Activated CD4-positive, alpha-beta memory T cell treated with anti-CD3 and anti-CD28 coated beads for 36 hours (primary cell): ENCODE measurements at regions of chr2 and their contacts with region 1.

Region 1: GRCh38 chr2:112726497-112727190 is 5.8 kb downstream of the NT5DC4 start:
- DNase-seq: peak; percentile 93
- H3K4me3 Mint-ChIP-seq: no peak overlapping the region
- H3K27ac Mint-ChIP-seq: no peak overlapping the region
- H3K4me1 Mint-ChIP-seq: no peaks in the 10 kb centered on the region
- H3K27me3 Mint-ChIP-seq: no peaks in the 10 kb centered on the region

Region 2: GRCh38 chr2:112584134-112584890 is 142.3 kb before region 1 on chr2 and contains the start of gene CHCHD5:
- CTCF ChIA-PET with region 1: interaction called, 21 read pairs
- POLR2A ChIA-PET with region 1: interaction called, 3 read pairs
- intact Hi-C with region 1: no loop called
- DNase-seq: peak; percentile 97
- H3K4me3 Mint-ChIP-seq: peak within 1 kb of the TSS; percentile 97
- H3K27ac Mint-ChIP-seq: peak within 1 kb of the TSS; percentile 99
- H3K4me1 Mint-ChIP-seq: peaks cover 30% of the 10 kb centered on the region
- H3K27me3 Mint-ChIP-seq: no peaks in the 10 kb centered on the region
- total RNA-seq, gene CHCHD5: 39.3 to 41.4 TPM

Region 3: DNA sequence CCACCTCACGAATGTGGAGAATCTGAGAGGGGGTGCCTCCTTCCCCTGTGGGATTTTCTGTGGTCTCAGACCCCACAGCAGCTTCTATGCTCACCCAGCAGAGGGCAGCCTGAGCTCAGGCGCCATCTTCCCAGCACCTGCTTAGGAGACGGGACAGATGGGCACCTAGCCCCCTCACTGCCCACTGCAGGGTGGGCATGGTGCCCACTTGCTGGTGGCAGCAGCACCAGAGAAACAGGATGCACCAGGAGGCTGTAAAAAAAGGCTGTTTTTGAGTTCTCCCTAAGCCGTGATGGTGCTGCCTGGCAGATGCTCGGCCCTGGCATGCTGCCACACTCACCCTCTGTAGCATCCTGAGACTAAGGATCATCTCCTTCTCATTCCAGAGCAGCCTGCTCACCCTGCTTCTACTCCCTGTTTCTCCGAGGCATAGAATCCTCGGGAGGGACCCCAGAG is 100.0 kb before region 1 on chr2:
- CTCF ChIA-PET with region 1: interaction called, 212 read pairs
- POLR2A ChIA-PET with region 1: interaction called, 4 read pairs
- intact Hi-C with region 1: loop called (anchors 1 kb)
- DNase-seq: peak; percentile 79
- H3K4me3 Mint-ChIP-seq: peak overlapping the region; percentile 46
- H3K27ac Mint-ChIP-seq: peak overlapping the region; percentile 88
- H3K4me1 Mint-ChIP-seq: peaks cover 67% of the 10 kb centered on the region
- H3K27me3 Mint-ChIP-seq: peaks cover 2% of the 10 kb centered on the region

Region 4: GRCh38 chr2:112679484-112679883 is 47.2 kb before region 1 on chr2:
- CTCF ChIA-PET with region 1: interaction called, 12 read pairs
- POLR2A ChIA-PET with region 1: no interaction called
- intact Hi-C with region 1: no loop called
- DNase-seq: no peak
- H3K4me3 Mint-ChIP-seq: no peak overlapping the region
- H3K27ac Mint-ChIP-seq: no peak overlapping the region
- H3K4me1 Mint-ChIP-seq: peaks cover 7% of the 10 kb centered on the region
- H3K27me3 Mint-ChIP-seq: peaks cover 2% of the 10 kb centered on the region

Region 5: DNA sequence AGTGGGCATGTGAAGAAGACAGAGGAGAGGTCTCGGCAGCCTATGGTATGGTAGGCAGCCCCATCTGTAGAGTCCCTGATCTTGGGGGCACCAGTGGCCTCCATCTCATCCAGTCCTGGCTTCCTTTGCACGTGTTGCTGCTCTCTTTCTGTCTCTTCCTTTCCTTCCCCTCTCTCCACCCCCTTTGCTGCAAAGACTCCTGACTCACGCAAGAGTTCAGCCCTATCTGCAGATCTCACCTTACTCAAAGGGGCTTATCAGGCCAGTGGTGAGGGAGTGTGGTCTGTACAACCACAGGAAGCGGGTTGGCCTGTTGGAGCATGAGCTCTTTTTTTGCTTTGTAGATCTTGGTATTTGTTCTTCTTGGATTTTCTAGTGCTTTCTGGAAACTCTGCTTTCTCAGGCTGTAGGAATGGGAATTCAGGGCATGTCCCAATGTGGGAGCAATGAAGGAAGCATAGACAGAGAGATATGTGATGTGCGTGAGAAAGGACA is 20.4 kb before region 1 on chr2:
- CTCF ChIA-PET with region 1: interaction called, 60 read pairs
- POLR2A ChIA-PET with region 1: no interaction called
- intact Hi-C with region 1: no loop called
- DNase-seq: peak; percentile 89
- H3K4me3 Mint-ChIP-seq: no peak overlapping the region
- H3K27ac Mint-ChIP-seq: peak overlapping the region; percentile 52
- H3K4me1 Mint-ChIP-seq: peaks cover 47% of the 10 kb centered on the region
- H3K27me3 Mint-ChIP-seq: peaks cover 6% of the 10 kb centered on the region

Region 6: GRCh38 chr2:112749755-112750559 is 23.3 kb after region 1 on chr2:
- CTCF ChIA-PET with region 1: interaction called, 12 read pairs
- POLR2A ChIA-PET with region 1: no interaction called
- intact Hi-C with region 1: no loop called
- DNase-seq: peak; percentile 90
- H3K4me3 Mint-ChIP-seq: peak overlapping the region; percentile 12
- H3K27ac Mint-ChIP-seq: peak overlapping the region; percentile 44
- H3K4me1 Mint-ChIP-seq: peaks cover 21% of the 10 kb centered on the region
- H3K27me3 Mint-ChIP-seq: no peaks in the 10 kb centered on the region

Region 7: GRCh38 chr2:112958428-112959108 is 231.9 kb after region 1 on chr2:
- CTCF ChIA-PET with region 1: interaction called, 14 read pairs
- POLR2A ChIA-PET with region 1: no interaction called
- intact Hi-C with region 1: no loop called
- DNase-seq: peak; percentile 37
- H3K4me3 Mint-ChIP-seq: no peak overlapping the region
- H3K27ac Mint-ChIP-seq: no peak overlapping the region
- H3K4me1 Mint-ChIP-seq: no peaks in the 10 kb centered on the region
- H3K27me3 Mint-ChIP-seq: no peaks in the 10 kb centered on the region